ENCODE measurements at regions of chr17 and their contacts with region 1.

Region 1: DNA sequence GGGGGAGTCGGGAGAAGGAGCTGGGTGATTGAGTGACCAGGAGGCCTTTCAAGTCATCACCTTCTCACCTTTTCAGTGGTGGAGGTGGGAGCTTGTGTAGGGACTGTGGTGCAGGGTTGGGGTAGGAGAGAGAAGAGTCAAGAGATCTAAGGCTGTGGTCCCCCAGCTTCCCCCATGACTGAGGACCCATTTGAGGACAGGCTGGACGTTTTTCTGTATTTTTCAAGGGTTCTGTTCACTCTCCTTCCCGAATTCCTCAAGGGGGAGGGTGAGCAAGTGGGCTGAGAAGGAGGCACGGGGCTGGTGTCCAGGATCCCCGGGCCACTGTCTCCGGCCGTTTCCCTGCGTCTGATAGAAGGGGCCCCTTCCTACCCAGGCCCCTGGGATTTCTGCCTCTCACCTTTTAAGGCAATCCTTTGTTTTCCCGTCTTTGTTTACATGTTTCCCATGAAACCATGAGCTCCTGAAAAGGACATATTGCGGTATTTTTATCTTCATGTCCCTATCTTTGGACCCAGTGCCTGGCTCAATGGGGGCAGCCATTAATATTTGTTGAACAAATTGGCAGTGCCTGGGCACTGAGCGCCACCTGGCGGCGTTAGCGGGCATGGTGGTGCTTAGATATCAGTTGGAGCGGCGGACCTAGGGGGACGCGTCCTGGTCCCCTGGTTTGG is 9.2 kb upstream of the CD300A start:
- DNase-seq: peak in 1 of 2 experiments; percentile 88
- H3K4me3 ChIP-seq: no peak overlapping the region
- H3K27ac ChIP-seq: no peak overlapping the region
- H3K4me1 ChIP-seq: peaks cover 3 to 31% (median 25%) of the 10 kb centered on the region in 4 experiments
- H3K27me3 ChIP-seq: peaks cover 0 to 14% (median 11%) of the 10 kb centered on the region in 4 experiments; a peak in 6 of 7 replicates
- CTCF ChIP-seq: peak; percentile 86 to 97 (median 86)
- EP300 ChIP-seq: no peak
- POLR2A ChIP-seq: no peak
- RAD21 ChIP-seq: peak; percentile 98 to 99

Region 2: DNA sequence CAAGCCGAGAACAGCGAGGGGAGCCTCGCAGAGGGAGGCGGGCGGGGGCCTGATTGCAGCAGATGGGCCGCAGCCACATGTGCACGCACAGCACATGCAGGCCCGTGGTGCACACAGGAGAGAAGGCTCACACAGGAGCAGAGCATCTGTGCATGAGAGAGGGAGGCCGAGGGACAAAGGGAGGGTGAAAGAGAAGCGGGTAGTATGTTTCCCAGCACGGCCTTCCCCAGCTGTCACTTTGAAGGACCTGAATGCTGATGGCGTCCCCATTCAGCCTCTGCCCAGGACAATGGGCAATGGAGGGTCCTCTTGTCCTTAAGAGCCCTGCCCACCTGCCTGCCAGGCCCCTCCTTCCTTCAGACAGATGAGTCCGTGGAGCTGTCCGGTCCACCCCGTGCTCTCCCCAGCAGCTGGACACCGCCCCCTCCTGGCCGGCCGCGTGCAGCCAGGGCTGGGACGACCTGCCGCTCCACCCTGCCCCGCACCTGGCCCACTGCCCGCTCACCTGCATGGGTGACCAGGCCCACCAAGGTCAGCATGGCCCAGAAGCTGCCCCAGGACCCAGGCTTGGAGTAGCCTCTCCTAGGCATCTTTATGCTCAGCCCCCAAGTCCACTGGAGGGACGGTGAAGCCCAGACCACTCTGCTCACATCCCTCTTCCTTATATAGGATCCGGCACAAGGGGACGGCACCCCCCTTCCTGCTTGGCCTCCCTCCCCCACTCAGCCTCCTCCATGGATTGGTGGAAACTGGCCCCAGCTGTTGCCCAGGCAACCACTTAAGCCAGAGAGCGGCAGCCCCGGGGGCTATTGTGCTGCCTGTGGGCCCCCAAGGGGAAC is 95.8 kb before region 1 on chr17 and contains the start of gene BTBD17:
- CTCF ChIA-PET with region 1: interaction called, 26 read pairs
- POLR2A ChIA-PET with region 1: interaction called, 3 read pairs
- DNase-seq: peak in 1 of 2 experiments; percentile 97
- H3K4me3 ChIP-seq: peak within 1 kb of the TSS in 3 of 4 experiments; percentile 24 to 54 (median 45); a peak in 6 of 8 replicates
- H3K27ac ChIP-seq: peak within 1 kb of the TSS; percentile 48
- H3K4me1 ChIP-seq: peaks cover 5 to 29% (median 19%) of the 10 kb centered on the region in 4 experiments
- H3K27me3 ChIP-seq: no peaks in the 10 kb centered on the region
- CTCF ChIP-seq: peak; percentile 82 to 100 (median 93)
- EP300 ChIP-seq: no peak
- POLR2A ChIP-seq: peak in 1 of 2 experiments; percentile 40; a peak in 1 of 3 replicates
- RAD21 ChIP-seq: peak; percentile 62 to 73
- total RNA-seq, gene BTBD17: 7.0 and 7.8 TPM in 2 replicates

Region 3: DNA sequence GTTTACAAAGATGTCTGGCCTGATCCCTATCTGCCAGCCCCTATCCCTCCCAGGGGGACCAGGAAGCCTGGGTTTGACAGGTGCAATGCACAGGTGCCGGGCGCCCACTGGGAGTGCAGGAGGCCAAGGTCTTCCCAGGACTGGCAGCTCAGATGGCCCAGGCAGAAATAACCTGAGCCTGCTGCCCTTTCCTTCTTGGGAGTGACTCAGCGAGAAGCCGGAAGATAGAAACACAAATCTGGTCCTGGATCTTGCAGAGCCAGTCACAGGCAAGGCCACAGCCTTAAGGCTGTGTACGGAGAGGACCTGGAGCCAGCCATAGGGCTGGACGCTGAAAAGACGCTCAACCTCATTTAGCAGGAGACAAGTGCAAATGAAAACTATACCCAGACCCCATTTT is 62.3 kb before region 1 on chr17:
- CTCF ChIA-PET with region 1: interaction called, 39 read pairs
- POLR2A ChIA-PET with region 1: no interaction called
- DNase-seq: no peak
- H3K4me3 ChIP-seq: no peak overlapping the region
- H3K27ac ChIP-seq: no peak overlapping the region
- H3K4me1 ChIP-seq: no peaks in the 10 kb centered on the region; a peak in 1 of 7 replicates
- H3K27me3 ChIP-seq: no peaks in the 10 kb centered on the region
- CTCF ChIP-seq: no peak
- EP300 ChIP-seq: no peak
- POLR2A ChIP-seq: no peak
- RAD21 ChIP-seq: no peak

Region 4: GRCh38 chr17:74417178-74418045 is 39.9 kb before region 1 on chr17:
- CTCF ChIA-PET with region 1: interaction called, 10 read pairs
- POLR2A ChIA-PET with region 1: interaction called, 3 read pairs
- DNase-seq: no peak
- H3K4me3 ChIP-seq: no peak overlapping the region
- H3K27ac ChIP-seq: no peak overlapping the region
- H3K4me1 ChIP-seq: peaks cover 0 to 4% (median 0%) of the 10 kb centered on the region in 4 experiments; a peak in 2 of 7 replicates
- H3K27me3 ChIP-seq: no peaks in the 10 kb centered on the region
- CTCF ChIP-seq: no peak
- EP300 ChIP-seq: no peak
- POLR2A ChIP-seq: no peak
- RAD21 ChIP-seq: no peak

Region 5: GRCh38 chr17:74442670-74443515 is 14.4 kb before region 1 on chr17:
- CTCF ChIA-PET with region 1: interaction called, 93 read pairs
- POLR2A ChIA-PET with region 1: interaction called, 22 read pairs
- DNase-seq: peak in 1 of 2 experiments; percentile 69
- H3K4me3 ChIP-seq: no peak overlapping the region; a peak in 2 of 8 replicates
- H3K27ac ChIP-seq: no peak overlapping the region; the same call in 1 of the 2 replicates
- H3K4me1 ChIP-seq: peaks cover 0 to 25% (median 18%) of the 10 kb centered on the region in 4 experiments; a peak in 6 of 7 replicates
- H3K27me3 ChIP-seq: no peaks in the 10 kb centered on the region
- CTCF ChIP-seq: no peak
- EP300 ChIP-seq: no peak
- POLR2A ChIP-seq: no peak
- RAD21 ChIP-seq: no peak

Region 6: DNA sequence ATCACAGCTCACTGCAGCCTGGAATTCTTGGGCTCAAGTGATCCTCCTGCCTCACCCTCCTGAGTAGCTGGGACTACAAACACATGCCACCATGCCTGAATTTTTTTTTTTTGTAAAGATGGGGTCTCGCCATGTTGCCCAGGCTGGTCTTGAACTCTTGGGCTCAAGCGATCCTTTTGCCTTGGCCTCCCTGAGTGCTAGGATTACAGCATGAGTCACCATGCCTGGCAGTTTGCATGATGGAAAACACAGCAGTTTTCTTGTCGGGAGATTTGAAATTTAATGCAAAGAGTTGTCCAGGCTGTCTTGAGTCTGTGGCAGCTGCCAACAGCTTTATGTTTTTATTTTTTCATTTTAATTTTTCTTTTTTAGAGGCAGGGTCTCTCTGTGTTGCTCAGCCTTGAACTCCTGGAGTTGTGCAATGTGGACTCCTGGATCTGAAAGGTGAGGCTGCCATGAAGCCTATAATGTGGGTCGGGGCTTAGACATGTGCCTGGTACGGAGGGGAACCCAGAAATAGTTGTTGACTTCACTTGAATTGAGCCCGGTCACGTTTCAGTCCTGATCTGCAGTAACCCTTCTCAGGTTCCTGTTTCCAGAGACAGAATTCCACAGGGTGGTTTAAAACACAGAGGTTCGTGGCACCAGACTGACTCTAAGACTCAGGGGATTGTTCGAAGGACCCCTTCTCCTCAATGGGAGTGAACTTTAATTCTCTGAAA is 27.9 kb after region 1 on chr17:
- CTCF ChIA-PET with region 1: interaction called, 29 read pairs
- POLR2A ChIA-PET with region 1: no interaction called
- DNase-seq: no peak
- H3K4me3 ChIP-seq: no peak overlapping the region
- H3K27ac ChIP-seq: no peak overlapping the region
- H3K4me1 ChIP-seq: no peaks in the 10 kb centered on the region
- H3K27me3 ChIP-seq: no peaks in the 10 kb centered on the region
- CTCF ChIP-seq: no peak
- EP300 ChIP-seq: no peak
- POLR2A ChIP-seq: no peak
- RAD21 ChIP-seq: no peak

Region 7: DNA sequence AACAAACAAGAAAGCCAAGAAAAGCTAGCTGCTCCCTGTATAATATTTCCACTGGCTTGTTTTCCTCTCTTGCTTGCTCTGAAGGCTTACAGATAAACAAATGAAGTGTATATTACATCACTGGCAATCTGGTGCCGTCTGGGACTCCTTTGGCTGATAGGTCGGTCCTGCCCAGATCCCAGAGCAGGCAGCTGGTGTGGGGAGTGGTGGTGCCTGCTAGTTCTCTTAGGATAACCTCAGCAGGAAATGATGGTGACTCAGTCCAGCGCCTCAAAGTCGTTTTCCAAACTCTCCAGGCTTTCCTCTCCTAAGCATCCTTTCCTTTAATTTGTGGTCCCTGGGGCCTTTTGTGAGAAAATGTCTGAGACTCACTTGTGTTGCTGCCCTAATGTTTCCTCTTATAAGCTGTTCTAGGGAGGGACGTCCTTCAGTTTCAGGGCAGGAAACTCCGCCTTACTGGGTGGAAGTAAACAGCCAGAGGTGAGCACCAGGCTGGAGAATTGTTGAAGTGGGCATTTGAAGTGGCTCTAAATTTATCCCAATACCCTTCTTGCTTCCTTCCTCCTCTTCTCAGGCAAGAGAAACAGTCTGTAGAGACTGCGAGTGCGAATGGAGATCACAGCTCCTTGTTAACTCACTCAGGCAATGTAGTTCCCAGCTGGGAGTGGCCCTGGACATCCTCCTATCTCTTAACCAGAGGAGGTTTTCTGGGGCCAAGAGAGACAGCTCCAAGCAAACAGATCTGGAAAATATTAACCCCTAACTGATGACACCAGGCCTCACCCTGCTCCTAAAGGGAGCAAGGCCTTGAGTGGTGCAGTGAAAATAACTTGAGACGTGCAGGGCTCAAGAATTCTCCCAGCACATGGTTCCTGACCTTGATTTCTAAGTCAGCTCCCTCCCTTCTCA is 220.5 kb after region 1 on chr17:
- CTCF ChIA-PET with region 1: no interaction called
- POLR2A ChIA-PET with region 1: no interaction called
- DNase-seq: no peak
- H3K4me3 ChIP-seq: no peak overlapping the region
- H3K27ac ChIP-seq: no peak overlapping the region
- H3K4me1 ChIP-seq: peaks cover 0 to 9% (median 6%) of the 10 kb centered on the region in 4 experiments; a peak in 5 of 7 replicates
- H3K27me3 ChIP-seq: peaks cover 0 to 13% (median 1%) of the 10 kb centered on the region in 4 experiments; a peak in 5 of 7 replicates
- CTCF ChIP-seq: no peak
- EP300 ChIP-seq: no peak
- POLR2A ChIP-seq: no peak
- RAD21 ChIP-seq: no peak

Measured in H1 (cell line).